Activated naive CD4-positive, alpha-beta T cell treated with anti-CD3 and anti-CD28 coated beads for 36 hours (primary cell): ENCODE measurements at regions of chr3 and their contacts with region 1.

Region 1: DNA sequence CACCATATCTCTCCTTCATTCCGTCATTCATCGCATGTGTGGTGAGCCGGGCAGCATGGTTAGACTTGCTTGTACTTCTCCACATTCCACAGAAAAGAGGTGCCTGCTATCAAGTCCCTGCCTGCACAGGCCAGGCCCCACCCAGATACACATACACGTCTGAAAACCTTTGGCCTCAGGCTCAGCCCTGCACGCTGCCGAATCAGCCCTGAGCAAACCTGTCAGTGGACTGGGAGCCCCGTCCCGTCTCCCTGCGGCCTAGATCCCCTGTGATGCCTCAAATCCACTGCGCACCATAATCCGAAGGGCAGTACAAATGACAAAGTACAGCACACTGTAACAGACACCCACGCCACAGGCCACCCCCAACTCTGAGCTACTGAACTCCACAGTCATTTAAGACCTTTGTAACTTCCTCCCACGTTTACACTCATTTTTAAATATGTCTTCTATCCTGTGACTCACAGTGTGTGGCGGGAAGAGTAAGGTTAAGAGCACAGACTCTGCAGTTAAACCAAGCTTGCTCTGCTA is 67.1 kb downstream of the MB21D2 start:
- DNase-seq: peak; percentile 73
- H3K4me3 Mint-ChIP-seq: peak overlapping the region; percentile 22
- H3K27ac Mint-ChIP-seq: peak overlapping the region; percentile 84
- H3K4me1 Mint-ChIP-seq: peaks cover 47% of the 10 kb centered on the region
- H3K27me3 Mint-ChIP-seq: peaks cover 5% of the 10 kb centered on the region

Region 2: DNA sequence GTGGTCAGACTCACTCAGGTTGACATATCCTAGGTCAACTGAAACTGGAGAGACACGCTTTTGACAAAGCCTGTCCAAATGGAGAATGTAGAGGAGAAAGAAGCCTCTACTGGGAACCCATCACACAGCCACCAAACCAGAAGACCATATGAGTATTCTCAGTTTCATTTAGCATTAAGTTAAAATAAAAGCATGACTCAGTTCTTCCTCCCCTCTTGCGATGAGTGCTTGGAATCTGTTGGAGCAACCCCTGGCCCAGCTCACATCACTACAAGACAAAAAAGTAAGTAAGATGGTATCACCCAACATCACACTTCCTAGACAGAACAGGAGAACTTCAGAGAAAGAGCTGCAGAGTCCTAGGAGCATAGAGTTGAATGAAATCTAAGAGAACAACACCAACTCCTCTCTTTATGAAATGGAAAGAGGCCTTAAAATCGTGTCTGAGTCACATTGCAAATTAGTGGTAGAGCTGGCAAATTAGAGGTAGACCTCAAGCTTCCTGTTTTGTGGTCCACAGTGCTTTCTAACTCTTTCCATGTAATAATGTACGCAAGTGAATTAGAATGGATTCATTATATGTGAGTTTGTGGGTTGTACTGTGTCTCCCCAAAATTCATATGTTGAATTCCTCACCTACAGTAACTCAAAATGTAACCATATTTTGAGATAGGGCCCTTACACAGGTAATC is 174.4 kb before region 1 on chr3:
- CTCF ChIA-PET with region 1: no interaction called
- intact Hi-C with region 1: loop called (anchors 1 kb)
- DNase-seq: peak; percentile 8
- H3K4me3 Mint-ChIP-seq: no peak overlapping the region
- H3K27ac Mint-ChIP-seq: peak overlapping the region; percentile 75
- H3K4me1 Mint-ChIP-seq: peaks cover 9% of the 10 kb centered on the region
- H3K27me3 Mint-ChIP-seq: peaks cover 5% of the 10 kb centered on the region

Region 3: GRCh38 chr3:192887047-192887446 is 36.5 kb after region 1 on chr3:
- CTCF ChIA-PET with region 1: no interaction called
- intact Hi-C with region 1: loop called (anchors 1 kb)
- DNase-seq: peak; percentile 36
- H3K4me3 Mint-ChIP-seq: no peak overlapping the region
- H3K27ac Mint-ChIP-seq: peak overlapping the region; percentile 82
- H3K4me1 Mint-ChIP-seq: peaks cover 59% of the 10 kb centered on the region
- H3K27me3 Mint-ChIP-seq: peaks cover 7% of the 10 kb centered on the region